B cell (primary cell): ENCODE measurements at regions of chr1 and their contacts with region 1.

Region 1: GRCh38 chr1:39196244-39197215 is 8.0 kb upstream of the MACF1 start:
- DNase-seq: peak; percentile 61
- ATAC-seq: peak; percentile 53
- H3K4me3 ChIP-seq: peak overlapping the region in 1 of 5 experiments; percentile 55
- H3K4me3 Mint-ChIP-seq: peak overlapping the region; percentile 57
- H3K27ac ChIP-seq: peak overlapping the region; percentile 62 to 78
- H3K27ac Mint-ChIP-seq: peak overlapping the region; percentile 87
- H3K4me1 ChIP-seq: peaks cover 51 to 59% of the 10 kb centered on the region in 2 donors
- H3K4me1 Mint-ChIP-seq: peaks cover 57% of the 10 kb centered on the region
- H3K27me3 ChIP-seq: no peaks in the 10 kb centered on the region
- H3K27me3 Mint-ChIP-seq: no peaks in the 10 kb centered on the region
- CTCF ChIP-seq: no peak

Region 2: GRCh38 chr1:39043513-39043912 is 153.0 kb before region 1 on chr1:
- CTCF ChIA-PET with region 1: no interaction called
- POLR2A ChIA-PET with region 1: no interaction called
- intact Hi-C with region 1: no loop called
- DNase-seq: no peak
- ATAC-seq: no peak
- H3K4me3 ChIP-seq: no peak overlapping the region
- H3K4me3 Mint-ChIP-seq: no peak overlapping the region
- H3K27ac ChIP-seq: peak overlapping the region in 1 of 2 donors; percentile 46
- H3K27ac Mint-ChIP-seq: peak overlapping the region; percentile 4
- H3K4me1 ChIP-seq: peaks cover 3 to 15% of the 10 kb centered on the region in 2 donors
- H3K4me1 Mint-ChIP-seq: peaks cover 18% of the 10 kb centered on the region
- H3K27me3 ChIP-seq: no peaks in the 10 kb centered on the region
- H3K27me3 Mint-ChIP-seq: no peaks in the 10 kb centered on the region
- CTCF ChIP-seq: no peak

Region 3: GRCh38 chr1:39098546-39099250 is 97.8 kb before region 1 on chr1:
- CTCF ChIA-PET with region 1: interaction called, 203 read pairs
- POLR2A ChIA-PET with region 1: interaction called, 18 read pairs
- intact Hi-C with region 1: loop called (anchors 1 kb)
- DNase-seq: peak; percentile 85
- ATAC-seq: peak; percentile 34
- H3K4me3 ChIP-seq: no peak overlapping the region
- H3K4me3 Mint-ChIP-seq: no peak overlapping the region
- H3K27ac ChIP-seq: no peak overlapping the region
- H3K27ac Mint-ChIP-seq: peak overlapping the region; percentile 6
- H3K4me1 ChIP-seq: peaks cover 17 to 23% of the 10 kb centered on the region in 2 donors
- H3K4me1 Mint-ChIP-seq: peaks cover 22% of the 10 kb centered on the region
- H3K27me3 ChIP-seq: no peaks in the 10 kb centered on the region
- H3K27me3 Mint-ChIP-seq: no peaks in the 10 kb centered on the region
- CTCF ChIP-seq: peak; percentile 79

Region 4: DNA sequence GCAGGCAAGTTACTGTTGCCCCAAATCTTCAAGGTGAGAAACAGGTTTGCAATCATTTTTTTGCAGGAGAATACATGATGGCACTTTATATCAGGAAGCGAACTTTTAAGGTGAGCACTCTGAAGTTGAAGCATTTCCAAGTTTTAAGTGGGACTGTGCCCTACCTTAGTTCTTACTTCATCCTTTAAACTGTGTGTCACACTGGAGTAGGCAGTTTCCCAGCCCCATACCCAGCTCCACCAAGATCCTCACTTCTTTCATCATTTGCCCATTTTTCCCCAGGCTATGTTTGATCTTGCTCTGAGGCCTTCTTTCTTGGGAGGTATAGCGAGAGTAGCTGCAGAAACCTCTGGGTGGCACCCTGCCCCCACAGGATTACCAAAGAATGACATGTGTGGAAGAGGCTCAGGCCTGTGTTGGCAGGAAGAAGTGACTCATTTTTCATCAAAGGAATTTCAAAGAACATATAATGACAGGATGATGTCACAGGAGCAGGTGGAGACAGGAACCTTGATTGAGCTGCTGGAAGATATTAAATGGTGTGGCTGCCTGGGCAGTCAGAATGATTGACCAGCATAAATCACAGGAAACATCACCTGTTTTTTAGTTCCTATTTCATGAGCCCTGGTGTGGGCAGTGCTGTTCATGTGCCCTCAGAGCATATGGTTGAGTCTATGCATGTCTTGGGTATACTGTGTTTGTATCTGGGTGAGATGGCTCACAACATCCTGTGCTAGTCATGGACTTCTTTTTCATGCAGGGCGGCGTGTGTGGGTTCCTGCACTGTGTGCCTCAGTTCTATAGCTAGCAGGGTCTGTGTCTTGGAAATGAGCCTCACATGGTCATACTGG is 12.8 kb before region 1 on chr1:
- CTCF ChIA-PET with region 1: interaction called, 11 read pairs
- POLR2A ChIA-PET with region 1: no interaction called
- intact Hi-C with region 1: no loop called
- DNase-seq: peak; percentile 63
- ATAC-seq: peak; percentile 83
- H3K4me3 ChIP-seq: no peak overlapping the region
- H3K4me3 Mint-ChIP-seq: peak overlapping the region; percentile 13
- H3K27ac ChIP-seq: peak overlapping the region; percentile 46 to 75
- H3K27ac Mint-ChIP-seq: peak overlapping the region; percentile 69
- H3K4me1 ChIP-seq: peaks cover 12 to 13% of the 10 kb centered on the region in 2 donors
- H3K4me1 Mint-ChIP-seq: peaks cover 24% of the 10 kb centered on the region
- H3K27me3 ChIP-seq: no peaks in the 10 kb centered on the region
- H3K27me3 Mint-ChIP-seq: no peaks in the 10 kb centered on the region
- CTCF ChIP-seq: peak; percentile 72

Region 5: GRCh38 chr1:39220891-39221870 is 24.7 kb after region 1 on chr1:
- CTCF ChIA-PET with region 1: interaction called, 101 read pairs
- POLR2A ChIA-PET with region 1: interaction called, 6 read pairs
- intact Hi-C with region 1: no loop called
- DNase-seq: no peak
- ATAC-seq: no peak
- H3K4me3 ChIP-seq: no peak overlapping the region
- H3K4me3 Mint-ChIP-seq: no peak overlapping the region
- H3K27ac ChIP-seq: no peak overlapping the region
- H3K27ac Mint-ChIP-seq: peak overlapping the region; percentile 50
- H3K4me1 ChIP-seq: peaks cover 40 to 47% of the 10 kb centered on the region in 2 donors
- H3K4me1 Mint-ChIP-seq: peaks cover 60% of the 10 kb centered on the region
- H3K27me3 ChIP-seq: no peaks in the 10 kb centered on the region
- H3K27me3 Mint-ChIP-seq: no peaks in the 10 kb centered on the region
- CTCF ChIP-seq: no peak

Region 6: DNA sequence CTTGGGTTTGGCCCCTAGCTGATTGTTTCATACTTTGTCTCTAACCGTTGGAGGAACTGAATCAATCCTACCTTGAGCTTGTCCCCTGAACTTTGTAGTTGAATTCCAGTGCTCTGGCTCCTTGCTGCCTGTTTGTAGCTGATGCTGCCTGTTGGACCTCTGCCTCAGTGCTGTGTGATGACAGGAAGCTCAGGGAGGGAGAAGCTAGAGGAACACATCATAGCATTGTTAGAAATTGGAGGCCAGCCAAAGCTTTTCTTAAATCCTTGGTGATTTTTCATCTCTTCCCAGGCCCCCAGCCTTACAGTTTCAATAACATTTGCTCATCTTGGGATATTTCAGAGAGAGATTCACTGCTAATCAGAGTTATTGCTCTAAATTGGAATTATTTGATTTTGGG is 41.9 kb after region 1 on chr1:
- CTCF ChIA-PET with region 1: interaction called, 20 read pairs
- POLR2A ChIA-PET with region 1: interaction called, 3 read pairs
- intact Hi-C with region 1: no loop called
- DNase-seq: no peak
- ATAC-seq: no peak
- H3K4me3 ChIP-seq: no peak overlapping the region
- H3K4me3 Mint-ChIP-seq: no peak overlapping the region
- H3K27ac ChIP-seq: peak overlapping the region in 1 of 2 donors; percentile 17
- H3K27ac Mint-ChIP-seq: no peak overlapping the region
- H3K4me1 ChIP-seq: peaks cover 8 to 10% of the 10 kb centered on the region in 2 donors
- H3K4me1 Mint-ChIP-seq: peaks cover 24% of the 10 kb centered on the region
- H3K27me3 ChIP-seq: no peaks in the 10 kb centered on the region
- H3K27me3 Mint-ChIP-seq: no peaks in the 10 kb centered on the region
- CTCF ChIP-seq: no peak

Region 7: GRCh38 chr1:39268112-39268581 is 71.6 kb after region 1 on chr1:
- CTCF ChIA-PET with region 1: interaction called, 439 read pairs
- POLR2A ChIA-PET with region 1: interaction called, 3 read pairs
- intact Hi-C with region 1: no loop called
- DNase-seq: peak; percentile 49
- ATAC-seq: no peak
- H3K4me3 ChIP-seq: peak overlapping the region in 3 of 5 experiments; percentile 12 to 47 (median 15)
- H3K4me3 Mint-ChIP-seq: peak overlapping the region; percentile 85
- H3K27ac ChIP-seq: peak overlapping the region; percentile 73 to 74
- H3K27ac Mint-ChIP-seq: peak overlapping the region; percentile 89
- H3K4me1 ChIP-seq: peaks cover 66 to 67% of the 10 kb centered on the region in 2 donors
- H3K4me1 Mint-ChIP-seq: peaks cover 65% of the 10 kb centered on the region
- H3K27me3 ChIP-seq: no peaks in the 10 kb centered on the region
- H3K27me3 Mint-ChIP-seq: no peaks in the 10 kb centered on the region
- CTCF ChIP-seq: no peak

Region 8: DNA sequence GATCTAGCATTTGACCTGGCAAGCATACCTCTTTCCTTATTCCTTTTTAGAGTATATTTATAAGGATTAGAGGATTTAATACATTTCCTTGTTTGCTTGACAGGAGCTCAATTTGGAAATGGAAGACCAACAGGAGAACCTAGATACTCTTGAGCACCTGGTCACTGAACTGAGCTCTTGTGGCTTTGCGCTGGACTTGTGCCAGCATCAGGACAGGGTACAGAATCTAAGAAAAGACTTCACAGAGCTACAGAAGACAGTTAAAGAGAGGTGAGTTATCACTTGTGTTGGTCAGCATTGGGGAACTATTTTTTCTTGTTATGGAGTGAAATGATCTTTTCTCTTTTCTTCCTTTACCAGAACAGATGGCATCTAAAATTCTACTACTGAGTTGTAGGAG is 171.5 kb after region 1 on chr1:
- CTCF ChIA-PET with region 1: interaction called, 11 read pairs
- POLR2A ChIA-PET with region 1: no interaction called
- intact Hi-C with region 1: no loop called
- DNase-seq: no peak
- ATAC-seq: no peak
- H3K4me3 ChIP-seq: no peak overlapping the region
- H3K4me3 Mint-ChIP-seq: no peak overlapping the region
- H3K27ac ChIP-seq: no peak overlapping the region
- H3K27ac Mint-ChIP-seq: no peak overlapping the region
- H3K4me1 ChIP-seq: no peaks in the 10 kb centered on the region
- H3K4me1 Mint-ChIP-seq: no peaks in the 10 kb centered on the region
- H3K27me3 ChIP-seq: no peaks in the 10 kb centered on the region
- H3K27me3 Mint-ChIP-seq: no peaks in the 10 kb centered on the region
- CTCF ChIP-seq: no peak